ENCODE measurements at regions of chr14 and their contacts with region 1.

Region 1: GRCh38 chr14:61512026-61512834 is 183.1 kb upstream of the HIF1A start:
- DNase-seq: no peak
- ATAC-seq: peak; percentile 25
- H3K4me3 Mint-ChIP-seq: no peak overlapping the region
- H3K27ac Mint-ChIP-seq: peak overlapping the region; percentile 69
- H3K4me1 Mint-ChIP-seq: peaks cover 40% of the 10 kb centered on the region
- H3K27me3 Mint-ChIP-seq: no peaks in the 10 kb centered on the region
- CTCF ChIP-seq: no peak

Region 2: GRCh38 chr14:60951776-60952435 is 560.3 kb before region 1 on chr14:
- CTCF ChIA-PET with region 1: no interaction called
- POLR2A ChIA-PET with region 1: no interaction called
- intact Hi-C with region 1: no loop called
- DNase-seq: no peak
- ATAC-seq: no peak
- H3K4me3 Mint-ChIP-seq: no peak overlapping the region
- H3K27ac Mint-ChIP-seq: no peak overlapping the region
- H3K4me1 Mint-ChIP-seq: no peaks in the 10 kb centered on the region
- H3K27me3 Mint-ChIP-seq: no peaks in the 10 kb centered on the region
- CTCF ChIP-seq: no peak

Region 3: GRCh38 chr14:61525293-61526011 is 13.2 kb after region 1 on chr14:
- CTCF ChIA-PET with region 1: interaction called, 9 read pairs
- POLR2A ChIA-PET with region 1: no interaction called
- intact Hi-C with region 1: loop called (anchors 2 kb)
- DNase-seq: no peak
- ATAC-seq: peak; percentile 69
- H3K4me3 Mint-ChIP-seq: no peak overlapping the region
- H3K27ac Mint-ChIP-seq: no peak overlapping the region
- H3K4me1 Mint-ChIP-seq: peaks cover 5% of the 10 kb centered on the region
- H3K27me3 Mint-ChIP-seq: no peaks in the 10 kb centered on the region
- CTCF ChIP-seq: no peak

Region 4: GRCh38 chr14:61542848-61543790 is 30.9 kb after region 1 on chr14:
- CTCF ChIA-PET with region 1: no interaction called
- POLR2A ChIA-PET with region 1: no interaction called
- intact Hi-C with region 1: no loop called
- DNase-seq: no peak
- ATAC-seq: no peak
- H3K4me3 Mint-ChIP-seq: no peak overlapping the region
- H3K27ac Mint-ChIP-seq: no peak overlapping the region
- H3K4me1 Mint-ChIP-seq: no peaks in the 10 kb centered on the region
- H3K27me3 Mint-ChIP-seq: no peaks in the 10 kb centered on the region
- CTCF ChIP-seq: no peak